Tibial artery (tissue), 4 donors: ENCODE measurements at regions of chr2 and their contacts with region 1.

Region 1: DNA sequence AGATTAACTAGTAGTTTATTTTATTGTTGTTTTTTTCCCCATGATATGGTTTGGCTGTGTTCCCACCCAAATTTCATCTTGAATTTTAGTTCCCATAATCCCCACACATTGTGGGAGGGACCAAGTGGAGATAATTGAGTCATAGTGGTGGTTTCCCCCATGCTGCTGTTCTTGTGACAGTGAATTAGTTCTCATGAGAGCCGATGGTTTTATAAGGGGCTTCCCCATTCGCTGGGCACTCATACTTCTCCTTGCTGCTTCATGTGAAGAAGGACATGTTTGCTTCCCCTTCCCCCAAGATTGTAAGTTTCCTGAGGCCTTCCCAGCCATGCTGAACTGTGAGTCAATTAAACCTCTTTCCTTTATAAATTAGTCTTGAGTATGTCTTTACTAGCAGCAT is 36.5 kb downstream of the GALNT14 start:
- DNase-seq: no peak
- H3K4me3 ChIP-seq: no peak overlapping the region
- H3K27ac ChIP-seq: no peak overlapping the region
- H3K4me1 ChIP-seq: no peaks in the 10 kb centered on the region
- H3K27me3 ChIP-seq: peaks cover 0 to 5% of the 10 kb centered on the region in 2 donors
- CTCF ChIP-seq: no peak

Region 2: DNA sequence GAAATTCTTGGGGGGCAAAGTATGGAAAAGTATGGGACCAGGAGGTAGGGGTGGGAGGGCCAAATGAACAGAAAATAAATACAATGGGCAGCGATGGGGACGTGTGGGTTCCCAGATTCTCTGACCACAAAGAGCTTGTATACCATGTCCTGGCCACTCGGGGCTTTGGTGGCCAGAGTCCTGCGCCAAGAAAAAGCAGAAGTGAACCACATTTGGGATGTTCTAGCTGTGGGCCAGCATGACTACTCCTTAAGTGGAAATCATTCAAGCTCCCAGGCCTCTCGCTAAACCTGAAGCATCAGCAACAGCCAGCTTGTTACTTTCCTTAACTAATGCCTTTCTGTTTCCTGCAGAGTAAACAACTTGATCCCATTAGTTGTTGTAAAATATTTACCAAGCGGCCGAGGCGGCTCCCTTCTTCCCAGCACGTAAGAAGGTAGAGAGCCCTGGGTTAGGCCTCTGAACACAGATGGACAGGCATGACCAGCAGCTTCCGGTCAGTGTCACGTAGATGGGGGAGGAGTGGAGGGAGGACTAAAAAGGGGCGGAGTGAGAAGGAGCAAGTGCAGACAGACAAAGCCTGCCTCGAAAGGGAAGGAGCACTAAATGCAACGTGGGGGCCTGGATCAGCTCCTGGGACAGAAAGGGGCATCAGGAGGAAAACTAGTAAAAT is 51.6 kb before region 1 on chr2:
- intact Hi-C with region 1: no loop called
- DNase-seq: no peak
- H3K4me3 ChIP-seq: no peak overlapping the region
- H3K27ac ChIP-seq: no peak overlapping the region
- H3K4me1 ChIP-seq: no peaks in the 10 kb centered on the region
- H3K27me3 ChIP-seq: no peaks in the 10 kb centered on the region
- CTCF ChIP-seq: no peak

Region 3: GRCh38 chr2:31067259-31067658 is 34.4 kb before region 1 on chr2:
- intact Hi-C with region 1: loop called (anchors 2 kb)
- DNase-seq: no peak
- H3K4me3 ChIP-seq: no peak overlapping the region
- H3K27ac ChIP-seq: no peak overlapping the region
- H3K4me1 ChIP-seq: no peaks in the 10 kb centered on the region
- H3K27me3 ChIP-seq: peaks cover 0 to 5% of the 10 kb centered on the region in 2 donors
- CTCF ChIP-seq: no peak

Region 4: DNA sequence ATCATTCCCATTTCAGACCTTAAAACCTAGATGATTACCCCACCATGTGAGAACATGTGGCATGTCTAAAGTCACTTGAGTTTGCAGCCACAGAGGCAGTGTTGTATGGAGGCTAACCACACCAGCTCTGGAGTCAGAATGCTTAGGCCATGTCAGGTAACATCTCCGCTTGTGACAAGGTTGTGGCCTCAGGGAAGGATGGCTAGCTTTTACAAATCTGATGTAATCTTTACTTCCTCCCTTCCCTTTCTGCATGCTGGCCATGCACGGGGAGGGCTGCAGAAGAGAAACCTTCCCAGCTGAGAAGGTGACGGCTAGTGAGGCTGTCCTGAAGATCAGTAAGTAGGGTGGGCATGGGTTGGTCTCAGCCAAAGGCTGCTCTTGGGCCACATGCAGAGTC is 72.5 kb after region 1 on chr2:
- intact Hi-C with region 1: no loop called
- DNase-seq: no peak
- H3K4me3 ChIP-seq: no peak overlapping the region
- H3K27ac ChIP-seq: no peak overlapping the region
- H3K4me1 ChIP-seq: no peaks in the 10 kb centered on the region
- H3K27me3 ChIP-seq: no peaks in the 10 kb centered on the region
- CTCF ChIP-seq: no peak

Region 5: GRCh38 chr2:31736695-31737454 is 635.2 kb after region 1 on chr2:
- intact Hi-C with region 1: no loop called
- DNase-seq: no peak
- H3K4me3 ChIP-seq: no peak overlapping the region
- H3K27ac ChIP-seq: no peak overlapping the region
- H3K4me1 ChIP-seq: no peaks in the 10 kb centered on the region
- H3K27me3 ChIP-seq: no peaks in the 10 kb centered on the region
- CTCF ChIP-seq: no peak